AG04450 (cell line): ENCODE measurements at regions of chrX and their contacts with region 1.

Region 1: GRCh38 chrX:39796856-39797255 is 300.9 kb downstream of the BCOR start:
- DNase-seq: no peak
- H3K4me3 ChIP-seq: no peak overlapping the region
- H3K27ac ChIP-seq: no peak overlapping the region
- H3K27me3 ChIP-seq: no peaks in the 10 kb centered on the region
- CTCF ChIP-seq: no peak

Region 2: GRCh38 chrX:40434443-40434842 is 637.6 kb after region 1 on chrX:
- CTCF ChIA-PET with region 1: no interaction called
- POLR2A ChIA-PET with region 1: interaction called, 10 read pairs
- DNase-seq: no peak
- H3K4me3 ChIP-seq: no peak overlapping the region
- H3K27ac ChIP-seq: no peak overlapping the region
- H3K27me3 ChIP-seq: no peaks in the 10 kb centered on the region
- CTCF ChIP-seq: no peak